ENCODE measurements at regions of chr11 and their contacts with region 1.

Region 1: DNA sequence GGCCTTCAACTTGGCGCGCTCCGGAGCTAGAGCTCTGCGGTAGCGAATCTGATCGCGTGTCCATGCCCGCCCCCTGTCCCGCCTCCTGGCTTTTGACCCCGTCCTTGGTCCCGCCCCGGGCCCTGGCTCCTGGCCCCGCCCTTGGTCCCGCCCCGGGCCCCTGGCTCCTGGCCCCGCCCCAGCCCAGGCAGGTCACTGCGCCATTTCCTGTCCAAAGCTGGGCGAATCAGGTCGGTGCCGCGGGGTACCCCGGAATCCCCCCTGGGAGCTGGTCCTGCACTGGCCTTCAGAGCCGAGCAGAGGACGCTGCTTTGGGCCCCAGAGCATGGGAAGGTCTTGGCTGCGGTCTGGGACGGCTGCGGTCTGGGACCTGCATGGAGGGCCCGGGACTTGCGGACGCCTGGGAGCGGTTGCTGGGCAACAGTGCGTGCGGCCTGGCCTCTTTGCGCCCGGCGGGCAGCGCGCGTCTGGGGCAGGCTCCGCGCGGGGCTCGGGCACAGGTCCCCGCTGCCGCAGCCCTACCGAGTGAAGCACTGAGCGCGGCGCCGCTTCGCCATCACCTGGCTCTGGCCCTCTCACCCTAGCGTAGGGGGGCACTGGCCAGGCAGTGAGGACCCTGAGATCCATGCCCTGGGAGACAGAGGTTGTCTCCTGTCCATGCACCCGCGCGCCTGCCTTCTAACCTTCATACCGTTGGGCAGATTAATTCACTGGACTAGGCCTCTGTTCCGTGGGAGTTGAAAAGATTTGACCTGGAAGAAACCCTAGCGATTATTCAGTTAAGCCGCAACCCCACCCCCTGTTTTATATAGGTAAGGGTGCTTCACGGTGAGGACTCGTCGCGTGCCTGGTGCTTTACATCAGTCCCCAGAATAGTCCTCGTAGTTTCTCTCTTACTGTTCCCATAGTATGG is at the start of gene TTC12:
- DNase-seq: peak; percentile 95
- CTCF ChIP-seq: no peak

Region 2: DNA sequence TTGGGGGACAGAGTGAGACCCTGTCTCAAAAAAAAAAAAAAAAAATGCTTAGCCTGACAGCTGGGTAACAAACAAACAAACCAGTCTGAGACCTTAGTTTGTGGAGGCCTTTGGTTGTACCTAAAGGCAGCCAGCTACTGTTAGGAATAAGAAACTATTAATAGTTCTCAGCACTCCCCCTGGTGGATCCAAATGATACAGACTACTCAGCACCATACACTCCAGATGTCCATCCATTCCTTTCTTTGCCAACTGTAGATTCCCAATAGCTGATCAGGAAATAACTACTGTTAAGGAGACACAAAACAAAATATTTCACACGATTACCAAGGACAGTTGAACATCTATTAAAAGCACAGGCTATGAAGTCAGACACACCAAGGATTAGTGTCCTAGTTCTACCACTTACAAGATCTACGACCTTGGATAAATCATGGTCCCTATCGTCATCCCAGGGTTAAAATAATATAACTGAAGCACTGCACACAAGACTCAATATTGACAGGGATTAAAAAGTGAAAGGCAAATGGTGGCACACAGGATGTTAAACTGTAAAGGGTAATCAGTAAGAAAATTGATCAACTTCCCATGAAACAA is 482.1 kb after region 1 on chr11:
- in situ Hi-C with region 1: loop called (anchors 25 kb)
- DNase-seq: peak; percentile 62
- CTCF ChIP-seq: peak; percentile 53